Right cardiac atrium (tissue), 5 donors: ENCODE measurements at regions of chr22 and their contacts with region 1.

Region 1: DNA sequence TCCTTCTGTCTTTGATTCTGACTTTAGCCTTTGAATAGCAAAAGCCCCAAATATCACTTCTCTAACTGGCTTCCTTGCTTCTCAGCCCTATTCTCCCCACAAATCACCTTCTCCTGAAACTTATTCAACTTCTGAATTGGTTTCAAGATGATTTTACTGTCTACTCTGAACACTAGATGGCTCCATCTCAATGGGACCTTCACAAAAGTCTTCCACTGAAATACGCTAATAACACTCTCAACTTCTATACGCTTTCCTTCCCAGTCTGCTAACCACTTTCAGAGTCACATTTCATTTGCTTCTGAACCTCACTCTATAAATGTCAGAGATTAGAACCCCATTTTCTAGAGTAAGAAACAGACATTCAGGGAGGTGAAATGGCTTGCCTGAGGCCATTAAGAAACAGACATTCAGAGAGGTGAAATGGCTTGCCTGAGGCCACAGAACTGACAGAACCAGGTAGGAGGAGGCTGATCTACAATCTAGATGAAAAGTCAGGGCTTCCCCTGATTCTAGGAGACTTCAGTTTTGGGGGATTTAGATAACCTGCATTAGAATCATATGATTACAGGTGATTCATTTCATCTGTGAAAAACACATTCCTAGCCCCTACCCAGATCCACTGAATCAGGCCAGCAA is 20.6 kb downstream of the MORC2 start:
- DNase-seq: no peak
- ATAC-seq: peak; percentile 66 to 70
- H3K4me3 ChIP-seq: no peak overlapping the region
- H3K27ac ChIP-seq: peak overlapping the region; percentile 89
- H3K4me1 ChIP-seq: peaks cover 11% of the 10 kb centered on the region
- H3K27me3 ChIP-seq: no peaks in the 10 kb centered on the region

Region 2: GRCh38 chr22:30816413-30816812 is 131.5 kb before region 1 on chr22:
- intact Hi-C with region 1: no loop called
- DNase-seq: no peak
- ATAC-seq: no peak
- H3K4me3 ChIP-seq: no peak overlapping the region
- H3K27ac ChIP-seq: no peak overlapping the region
- H3K4me1 ChIP-seq: no peaks in the 10 kb centered on the region
- H3K27me3 ChIP-seq: no peaks in the 10 kb centered on the region

Region 3: DNA sequence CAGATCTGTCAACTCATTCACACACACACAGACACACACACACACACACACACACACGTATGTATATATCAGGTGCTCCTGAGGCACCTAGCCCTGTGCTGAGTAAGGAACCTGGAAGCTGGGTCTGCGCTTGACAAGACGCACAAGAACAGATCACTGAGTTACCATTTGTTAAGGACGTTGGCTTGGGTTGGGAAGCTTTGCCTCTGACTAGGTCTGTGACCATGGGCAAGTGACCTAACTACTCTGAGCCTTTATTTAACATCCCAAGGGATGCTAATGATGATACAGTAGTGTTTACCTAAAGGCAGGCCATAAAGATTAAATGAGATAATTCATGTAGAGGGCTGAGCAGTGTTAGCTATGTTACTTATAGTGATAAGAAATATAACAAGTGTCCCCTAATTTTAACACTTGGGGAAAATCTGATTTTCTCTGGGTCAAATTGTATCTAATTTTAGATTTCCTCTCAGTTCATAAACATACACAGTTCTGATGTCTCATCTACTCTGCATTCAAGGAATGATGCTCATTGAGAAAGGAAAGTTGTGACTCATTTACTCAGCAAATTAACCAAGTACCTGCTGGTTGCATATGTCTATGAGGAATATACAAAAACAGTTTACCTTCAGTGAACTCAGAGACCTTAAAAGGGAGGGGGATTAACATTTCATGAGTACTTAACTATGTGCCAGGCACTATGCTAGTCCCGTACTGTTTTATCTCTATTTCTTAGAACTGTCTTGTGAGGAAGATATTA is 225.6 kb after region 1 on chr22:
- intact Hi-C with region 1: no loop called
- DNase-seq: no peak
- ATAC-seq: peak; percentile 20 to 27
- H3K4me3 ChIP-seq: no peak overlapping the region
- H3K27ac ChIP-seq: no peak overlapping the region
- H3K4me1 ChIP-seq: peaks cover 8% of the 10 kb centered on the region
- H3K27me3 ChIP-seq: no peaks in the 10 kb centered on the region

Region 4: GRCh38 chr22:31230871-31231621 is 283.1 kb after region 1 on chr22:
- intact Hi-C with region 1: loop called in 1 of 4 experiments (anchors 5 kb)
- DNase-seq: peak in 1 of 3 donors; percentile 72
- ATAC-seq: peak; percentile 77 to 81
- H3K4me3 ChIP-seq: no peak overlapping the region
- H3K27ac ChIP-seq: peak overlapping the region; percentile 95
- H3K4me1 ChIP-seq: peaks cover 13% of the 10 kb centered on the region
- H3K27me3 ChIP-seq: no peaks in the 10 kb centered on the region